Aorta (tissue), 5 donors: ENCODE measurements at regions of chr9 and their contacts with region 1.

Region 1: GRCh38 chr9:119289740-119290433 is 79.3 kb downstream of the BRINP1 start:
- DNase-seq: no peak
- ATAC-seq: peak; percentile 79
- H3K4me3 ChIP-seq: no peak overlapping the region
- H3K27ac ChIP-seq: no peak overlapping the region
- H3K4me1 ChIP-seq: no peaks in the 10 kb centered on the region
- H3K27me3 ChIP-seq: no peaks in the 10 kb centered on the region

Region 2: DNA sequence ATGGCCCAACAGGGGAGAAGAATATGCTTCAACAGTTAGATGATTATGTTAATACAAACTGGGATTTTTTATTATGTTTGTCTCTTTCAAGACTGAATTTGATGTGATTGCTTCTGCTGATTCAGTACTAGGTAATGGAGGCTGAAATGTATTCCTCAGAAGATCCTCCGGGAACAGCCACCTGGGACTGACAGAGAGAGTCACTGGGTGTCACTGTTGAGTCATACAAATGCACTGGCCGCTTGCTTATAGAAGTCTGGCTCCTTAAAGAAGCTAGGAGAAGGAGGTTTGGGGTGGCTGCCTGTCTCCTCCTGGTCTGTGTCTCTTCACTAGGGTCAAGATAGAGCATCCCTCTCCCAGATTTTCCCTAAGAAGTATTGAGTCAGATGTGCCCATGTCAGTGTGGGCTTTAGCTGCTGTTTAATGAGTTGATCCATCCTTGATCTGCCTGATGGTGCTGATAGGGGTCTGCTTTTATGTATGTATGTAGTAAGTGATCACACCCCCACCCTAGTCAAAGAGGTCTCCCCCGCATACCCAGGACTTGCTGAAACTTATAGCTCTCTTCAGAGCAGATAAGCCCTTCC is 694.1 kb before region 1 on chr9:
- intact Hi-C with region 1: loop called in 1 of 2 experiments (anchors 5 kb)
- DNase-seq: no peak
- ATAC-seq: no peak
- H3K4me3 ChIP-seq: no peak overlapping the region
- H3K27ac ChIP-seq: no peak overlapping the region
- H3K4me1 ChIP-seq: no peaks in the 10 kb centered on the region
- H3K27me3 ChIP-seq: no peaks in the 10 kb centered on the region

Region 3: GRCh38 chr9:118686959-118687358 is 602.9 kb before region 1 on chr9:
- intact Hi-C with region 1: no loop called
- DNase-seq: no peak
- ATAC-seq: no peak
- H3K4me3 ChIP-seq: no peak overlapping the region
- H3K27ac ChIP-seq: no peak overlapping the region
- H3K4me1 ChIP-seq: no peaks in the 10 kb centered on the region
- H3K27me3 ChIP-seq: no peaks in the 10 kb centered on the region

Region 4: DNA sequence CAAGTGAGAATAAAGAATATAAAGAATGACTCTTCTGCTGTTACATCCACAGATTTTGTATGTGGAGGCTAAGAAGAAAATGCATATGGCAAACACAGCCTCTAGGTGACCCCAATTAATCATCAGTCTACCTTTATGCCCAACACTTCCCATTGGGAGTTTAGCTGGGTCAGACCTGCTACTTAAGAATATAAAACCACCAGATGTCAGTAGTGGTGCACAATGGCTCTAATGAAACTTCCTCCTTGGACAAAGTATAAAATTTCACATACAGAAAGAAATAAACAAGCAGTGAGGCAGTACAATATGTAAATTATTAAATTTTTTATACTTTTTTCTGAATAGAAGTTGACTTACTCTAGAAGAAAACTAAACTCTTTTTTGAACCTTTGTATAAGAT is 460.6 kb before region 1 on chr9:
- intact Hi-C with region 1: loop called (anchors 2 to 5 kb)
- DNase-seq: no peak
- ATAC-seq: peak; percentile 59
- H3K4me3 ChIP-seq: no peak overlapping the region
- H3K27ac ChIP-seq: no peak overlapping the region
- H3K4me1 ChIP-seq: no peaks in the 10 kb centered on the region
- H3K27me3 ChIP-seq: no peaks in the 10 kb centered on the region

Region 5: GRCh38 chr9:119334745-119335144 is 44.9 kb after region 1 on chr9:
- intact Hi-C with region 1: no loop called
- DNase-seq: no peak
- ATAC-seq: no peak
- H3K4me3 ChIP-seq: no peak overlapping the region
- H3K27ac ChIP-seq: no peak overlapping the region
- H3K4me1 ChIP-seq: no peaks in the 10 kb centered on the region
- H3K27me3 ChIP-seq: no peaks in the 10 kb centered on the region

Region 6: GRCh38 chr9:119487118-119487827 is 197.4 kb after region 1 on chr9:
- intact Hi-C with region 1: no loop called
- DNase-seq: no peak
- ATAC-seq: no peak
- H3K4me3 ChIP-seq: no peak overlapping the region
- H3K27ac ChIP-seq: no peak overlapping the region
- H3K4me1 ChIP-seq: no peaks in the 10 kb centered on the region
- H3K27me3 ChIP-seq: no peaks in the 10 kb centered on the region

Region 7: GRCh38 chr9:119998614-119999013 is 708.7 kb after region 1 on chr9:
- intact Hi-C with region 1: no loop called
- DNase-seq: no peak
- ATAC-seq: no peak
- H3K4me3 ChIP-seq: no peak overlapping the region
- H3K27ac ChIP-seq: no peak overlapping the region
- H3K4me1 ChIP-seq: no peaks in the 10 kb centered on the region
- H3K27me3 ChIP-seq: no peaks in the 10 kb centered on the region